ENCODE measurements at regions of chr11 and their contacts with region 1.

Region 1: DNA sequence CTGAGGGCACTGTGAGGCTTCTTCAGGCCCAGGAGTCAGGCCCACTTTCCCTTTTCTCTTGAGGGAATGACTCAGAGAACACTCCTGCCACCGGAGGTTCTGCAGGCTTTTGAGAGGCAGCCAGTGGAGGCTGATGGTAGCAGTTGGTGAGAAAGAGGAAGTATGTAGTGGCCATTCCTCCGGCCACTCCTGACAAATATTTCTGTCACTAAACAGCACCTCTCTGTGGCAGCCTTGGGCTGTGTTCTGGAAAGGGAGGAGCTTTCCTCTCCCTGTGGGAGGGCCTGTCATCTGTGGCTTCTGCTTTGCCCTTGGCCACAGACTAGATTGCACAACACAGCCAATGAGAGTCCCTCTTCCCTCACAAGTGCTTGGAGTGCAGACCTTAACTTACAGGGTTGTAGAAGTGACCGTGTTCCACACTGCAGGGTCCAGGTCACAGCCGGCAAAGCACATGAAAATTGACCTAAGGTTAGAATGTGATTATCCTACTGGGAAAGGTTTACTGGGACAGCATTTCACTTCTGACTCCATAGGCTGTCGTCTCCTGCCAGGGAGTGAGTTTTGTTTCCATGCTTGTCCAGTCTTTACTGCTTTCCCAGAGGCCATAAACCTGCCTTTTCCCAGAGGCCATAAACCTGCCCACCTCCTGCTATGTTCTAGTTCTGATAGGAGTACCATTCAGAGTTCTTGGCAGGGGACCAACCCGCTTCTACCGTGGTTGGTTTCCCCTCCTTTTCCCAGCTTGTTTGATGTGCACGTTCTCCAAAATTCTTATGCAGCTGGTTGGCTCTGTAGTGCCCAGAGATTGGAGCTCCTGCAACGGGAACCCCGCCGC is 33.3 kb downstream of the MARK2 start:
- DNase-seq: peak; percentile 93
- H3K4me3 ChIP-seq: peak overlapping the region in 1 of 4 donors; percentile 4
- H3K27ac ChIP-seq: peak overlapping the region; percentile 50 to 78 (median 70)
- H3K4me1 ChIP-seq: peaks cover 0 to 84% (median 69%) of the 10 kb centered on the region in 4 donors
- H3K27me3 ChIP-seq: no peaks in the 10 kb centered on the region
- CTCF ChIP-seq: peak in 2 of 4 experiments; percentile 21 to 23
- EP300 ChIP-seq: no peak
- POLR2A ChIP-seq: no peak

Region 2: GRCh38 chr11:63838678-63839507 is 33.3 kb before region 1 on chr11 and contains the start of gene MARK2:
- intact Hi-C with region 1: loop called (anchors 2 kb)
- DNase-seq: peak; percentile 99
- H3K4me3 ChIP-seq: peak within 1 kb of the TSS; percentile 71 to 95 (median 88)
- H3K27ac ChIP-seq: peak within 1 kb of the TSS; percentile 83 to 92 (median 87)
- H3K4me1 ChIP-seq: peaks cover 0 to 51% (median 48%) of the 10 kb centered on the region in 4 donors
- H3K27me3 ChIP-seq: no peaks in the 10 kb centered on the region
- CTCF ChIP-seq: no peak
- EP300 ChIP-seq: no peak
- POLR2A ChIP-seq: peak in 1 of 2 donors; percentile 35
- total RNA-seq, gene MARK2: 14.3 to 24.6 (median 18.2) TPM